ENCODE measurements at regions of chr21 and their contacts with region 1.

Region 1: GRCh38 chr21:37631319-37632117 is 264.9 kb downstream of the DYRK1A start:
- DNase-seq: peak; percentile 27
- ATAC-seq: peak; percentile 23
- H3K4me3 Mint-ChIP-seq: no peak overlapping the region
- H3K27ac Mint-ChIP-seq: no peak overlapping the region
- H3K4me1 Mint-ChIP-seq: peaks cover 6% of the 10 kb centered on the region
- H3K27me3 Mint-ChIP-seq: peaks cover 40% of the 10 kb centered on the region

Region 2: DNA sequence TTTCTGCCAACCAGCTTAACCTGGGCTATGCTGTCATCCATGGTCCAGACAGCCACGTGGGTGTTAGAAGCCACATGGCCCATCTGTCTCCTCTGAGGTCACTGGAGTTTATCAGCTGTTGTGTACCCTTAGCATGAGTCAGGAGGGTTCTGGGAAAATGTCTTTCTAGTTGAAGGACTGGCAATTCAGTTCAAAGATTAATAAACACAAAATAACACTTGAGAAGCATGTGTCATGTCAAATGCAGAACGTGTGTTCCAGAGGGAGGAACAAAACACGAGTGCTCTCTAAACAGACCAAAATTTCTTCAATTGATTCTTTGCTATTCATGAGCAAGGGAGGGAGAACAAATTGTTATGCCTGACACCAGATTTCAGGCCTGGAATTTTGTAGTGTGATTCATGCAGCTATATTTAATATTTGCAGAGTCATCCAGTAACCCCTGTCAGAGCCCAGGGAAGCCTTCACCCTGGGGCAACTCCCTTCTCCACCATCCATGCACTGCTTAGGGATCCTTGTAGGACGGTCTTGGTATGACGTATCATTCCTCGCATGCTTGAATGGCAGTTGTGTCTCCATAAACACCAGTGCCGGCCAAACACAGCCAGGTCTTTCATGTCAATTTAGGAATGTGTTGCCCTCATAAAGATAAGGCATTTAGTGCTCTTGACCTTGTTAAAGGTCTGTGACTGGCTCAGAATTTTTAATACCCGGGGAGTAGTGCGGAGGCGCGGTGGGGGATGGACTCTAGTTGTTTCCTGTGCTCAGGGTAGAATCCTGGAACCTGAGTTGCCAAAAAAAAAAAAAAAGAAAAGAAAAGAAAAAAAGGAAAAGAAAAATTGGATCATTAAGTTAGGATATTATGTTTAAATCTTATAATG is 292.6 kb before region 1 on chr21:
- CTCF ChIA-PET with region 1: no interaction called
- POLR2A ChIA-PET with region 1: no interaction called
- intact Hi-C with region 1: loop called in 1 of 2 experiments (anchors 10 kb)
- DNase-seq: no peak
- ATAC-seq: no peak
- H3K4me3 Mint-ChIP-seq: no peak overlapping the region
- H3K27ac Mint-ChIP-seq: no peak overlapping the region
- H3K4me1 Mint-ChIP-seq: peaks cover 6% of the 10 kb centered on the region
- H3K27me3 Mint-ChIP-seq: no peaks in the 10 kb centered on the region

Region 3: GRCh38 chr21:38544661-38545060 is 913.1 kb after region 1 on chr21:
- CTCF ChIA-PET with region 1: no interaction called
- POLR2A ChIA-PET with region 1: no interaction called
- intact Hi-C with region 1: no loop called
- DNase-seq: no peak
- ATAC-seq: no peak
- H3K4me3 Mint-ChIP-seq: no peak overlapping the region
- H3K27ac Mint-ChIP-seq: no peak overlapping the region
- H3K4me1 Mint-ChIP-seq: no peaks in the 10 kb centered on the region
- H3K27me3 Mint-ChIP-seq: peaks cover 2% of the 10 kb centered on the region

Measured in activated CD4-positive, alpha-beta T cell treated with anti-CD3 and anti-CD28 coated beads for 36 hours (primary cell).